ENCODE measurements at regions of chr10 and their contacts with region 1.

Region 1: DNA sequence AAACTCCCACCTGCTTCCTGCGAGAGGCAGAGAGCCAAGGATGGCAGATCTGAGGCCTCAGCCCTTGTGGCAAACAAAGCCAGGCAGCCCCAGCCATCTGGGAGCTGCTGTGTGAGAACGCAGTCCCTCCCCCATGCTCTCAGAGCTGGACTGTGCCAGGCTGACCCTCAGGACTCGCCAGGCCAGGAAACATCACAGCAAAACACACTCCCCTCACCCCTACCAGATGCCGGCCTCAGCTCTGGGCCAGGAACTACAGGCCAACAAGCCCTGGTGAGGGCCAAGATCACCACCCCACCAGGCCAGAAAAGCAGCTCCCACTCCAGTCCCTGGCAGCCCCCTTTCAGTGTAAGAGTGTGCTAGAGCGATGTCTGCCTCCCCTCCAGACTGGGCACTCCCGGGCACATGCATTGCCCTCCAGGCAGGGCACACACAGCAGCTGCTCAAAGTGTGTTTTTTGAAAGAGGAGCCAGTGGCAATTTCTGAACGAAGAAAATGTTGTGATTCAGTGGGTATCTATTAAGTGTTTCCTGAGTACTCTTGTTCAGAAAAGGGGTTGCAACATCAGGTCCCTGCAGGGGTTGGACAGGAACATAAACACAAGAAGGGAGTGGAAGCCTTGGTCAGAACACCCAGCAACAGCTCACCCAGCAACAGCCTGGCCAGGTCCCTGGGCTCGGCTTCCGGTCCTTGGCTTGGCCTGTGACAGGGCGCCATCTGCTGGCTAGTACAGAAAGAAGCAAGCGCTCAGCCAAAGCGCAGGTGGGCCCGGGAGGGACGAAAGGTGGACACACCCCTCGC is 18.3 kb downstream of the LRRC20 start:
- DNase-seq: peak; percentile 89
- H3K4me3 Mint-ChIP-seq: no peak overlapping the region
- H3K27ac Mint-ChIP-seq: peak overlapping the region; percentile 57
- H3K4me1 Mint-ChIP-seq: peaks cover 12% of the 10 kb centered on the region
- H3K27me3 Mint-ChIP-seq: no peaks in the 10 kb centered on the region

Region 2: DNA sequence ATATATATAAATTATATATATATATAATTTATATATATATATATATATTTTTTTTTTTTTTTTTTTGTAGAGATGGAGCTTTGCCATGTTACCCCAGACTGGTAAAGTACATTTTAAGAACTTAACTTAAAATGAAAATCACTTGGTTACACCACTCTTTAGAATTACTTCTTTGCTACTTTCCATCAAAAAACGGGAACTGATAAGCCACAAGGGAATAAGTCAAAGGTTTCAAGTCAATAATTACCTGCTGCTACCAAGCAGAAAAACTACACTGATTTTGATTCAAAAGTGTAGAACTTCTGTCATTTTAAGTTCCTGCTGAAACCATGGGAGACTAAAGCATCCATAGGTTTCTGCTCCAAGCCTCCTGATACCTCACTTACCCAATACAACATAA is 143.1 kb before region 1 on chr10:
- CTCF ChIA-PET with region 1: interaction called, 79 read pairs
- POLR2A ChIA-PET with region 1: interaction called, 13 read pairs
- DNase-seq: no peak
- H3K4me3 Mint-ChIP-seq: peak overlapping the region; percentile 7
- H3K27ac Mint-ChIP-seq: peak overlapping the region; percentile 68
- H3K4me1 Mint-ChIP-seq: peaks cover 23% of the 10 kb centered on the region
- H3K27me3 Mint-ChIP-seq: no peaks in the 10 kb centered on the region

Region 3: DNA sequence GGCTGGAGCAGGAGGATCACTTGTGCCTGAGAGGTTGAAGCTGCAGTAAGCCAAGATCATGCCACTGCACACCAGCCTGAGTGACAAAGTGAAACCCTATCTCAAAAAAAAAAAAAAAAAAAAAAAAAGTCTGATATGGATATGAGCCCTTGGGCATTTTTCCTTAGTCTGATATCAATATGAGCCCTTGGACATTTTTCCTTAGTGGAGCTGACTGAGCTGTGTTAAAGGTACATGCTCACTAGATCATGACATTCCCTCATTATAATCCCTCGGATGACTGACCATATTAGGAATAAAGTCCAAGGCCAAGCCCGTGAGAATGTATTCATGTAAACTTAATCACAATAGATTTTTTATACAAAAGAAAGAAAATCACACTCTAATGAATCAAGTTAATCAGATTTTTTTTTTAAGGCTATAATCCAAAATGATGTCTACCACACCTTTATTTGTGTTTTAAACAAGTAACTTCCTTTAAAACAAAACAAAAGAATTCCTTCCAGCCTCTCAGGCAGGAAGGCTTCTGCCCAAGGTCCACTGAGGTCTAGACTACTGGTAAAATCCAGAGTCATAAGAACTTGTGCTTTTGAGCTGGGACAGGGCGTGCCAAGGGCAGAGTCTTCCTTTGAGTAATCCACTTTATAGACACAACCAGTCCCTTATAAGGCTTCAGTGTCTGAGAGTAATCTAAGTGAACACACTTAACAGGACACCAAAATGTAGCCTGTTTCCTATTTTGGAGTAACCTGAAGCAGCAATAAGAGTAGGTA is 136.4 kb before region 1 on chr10:
- CTCF ChIA-PET with region 1: interaction called, 79 read pairs
- POLR2A ChIA-PET with region 1: no interaction called
- DNase-seq: no peak
- H3K4me3 Mint-ChIP-seq: no peak overlapping the region
- H3K27ac Mint-ChIP-seq: no peak overlapping the region
- H3K4me1 Mint-ChIP-seq: peaks cover 58% of the 10 kb centered on the region
- H3K27me3 Mint-ChIP-seq: no peaks in the 10 kb centered on the region

Region 4: DNA sequence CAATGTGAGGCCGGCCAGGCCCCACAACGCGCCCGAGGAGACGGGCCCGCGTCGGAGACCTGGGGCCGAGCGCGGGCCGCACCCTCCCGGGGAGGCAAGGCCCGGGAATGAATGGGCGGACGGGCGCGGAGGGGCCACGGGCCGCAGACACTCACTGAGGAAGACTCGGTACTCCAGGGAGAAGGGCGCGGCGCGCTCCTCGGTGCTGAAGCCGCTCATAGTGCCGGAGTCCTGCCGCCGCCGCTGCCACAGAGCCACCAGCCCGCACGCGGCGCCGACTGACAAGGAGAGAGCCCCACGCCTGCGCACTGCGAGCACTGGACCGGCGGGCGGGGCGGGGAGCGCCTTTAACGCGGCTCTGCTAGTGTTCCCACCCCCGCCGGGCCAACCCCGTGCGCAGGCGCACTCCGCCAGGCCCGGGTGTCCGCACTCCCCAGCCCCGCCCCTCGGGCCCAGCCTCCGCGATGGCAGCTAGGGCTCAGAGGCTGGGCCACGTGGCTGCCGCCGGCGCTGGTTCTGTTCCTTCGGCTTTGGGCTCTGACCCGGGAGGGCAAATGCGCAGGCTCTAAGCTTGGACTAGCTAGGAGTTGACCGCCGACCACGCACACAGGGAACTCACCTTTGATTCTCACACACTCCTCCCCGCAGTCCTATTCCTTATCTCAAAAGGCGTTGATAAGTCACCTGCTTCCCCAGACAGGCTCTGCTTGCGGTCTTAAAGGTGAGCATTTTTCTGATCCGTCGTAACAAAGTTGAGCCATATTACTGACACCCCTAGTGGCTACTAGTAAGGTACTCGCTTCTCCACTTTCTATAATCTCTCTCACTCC is 130.8 kb before region 1 on chr10 and contains the start of gene PPA1:
- CTCF ChIA-PET with region 1: interaction called, 13 read pairs
- POLR2A ChIA-PET with region 1: interaction called, 3 read pairs
- DNase-seq: peak; percentile 99
- H3K4me3 Mint-ChIP-seq: peak within 1 kb of the TSS; percentile 75
- H3K27ac Mint-ChIP-seq: peak within 1 kb of the TSS; percentile 92
- H3K4me1 Mint-ChIP-seq: peaks cover 46% of the 10 kb centered on the region
- H3K27me3 Mint-ChIP-seq: no peaks in the 10 kb centered on the region
- total RNA-seq, gene PPA1: 124 to 132 TPM

Region 5: DNA sequence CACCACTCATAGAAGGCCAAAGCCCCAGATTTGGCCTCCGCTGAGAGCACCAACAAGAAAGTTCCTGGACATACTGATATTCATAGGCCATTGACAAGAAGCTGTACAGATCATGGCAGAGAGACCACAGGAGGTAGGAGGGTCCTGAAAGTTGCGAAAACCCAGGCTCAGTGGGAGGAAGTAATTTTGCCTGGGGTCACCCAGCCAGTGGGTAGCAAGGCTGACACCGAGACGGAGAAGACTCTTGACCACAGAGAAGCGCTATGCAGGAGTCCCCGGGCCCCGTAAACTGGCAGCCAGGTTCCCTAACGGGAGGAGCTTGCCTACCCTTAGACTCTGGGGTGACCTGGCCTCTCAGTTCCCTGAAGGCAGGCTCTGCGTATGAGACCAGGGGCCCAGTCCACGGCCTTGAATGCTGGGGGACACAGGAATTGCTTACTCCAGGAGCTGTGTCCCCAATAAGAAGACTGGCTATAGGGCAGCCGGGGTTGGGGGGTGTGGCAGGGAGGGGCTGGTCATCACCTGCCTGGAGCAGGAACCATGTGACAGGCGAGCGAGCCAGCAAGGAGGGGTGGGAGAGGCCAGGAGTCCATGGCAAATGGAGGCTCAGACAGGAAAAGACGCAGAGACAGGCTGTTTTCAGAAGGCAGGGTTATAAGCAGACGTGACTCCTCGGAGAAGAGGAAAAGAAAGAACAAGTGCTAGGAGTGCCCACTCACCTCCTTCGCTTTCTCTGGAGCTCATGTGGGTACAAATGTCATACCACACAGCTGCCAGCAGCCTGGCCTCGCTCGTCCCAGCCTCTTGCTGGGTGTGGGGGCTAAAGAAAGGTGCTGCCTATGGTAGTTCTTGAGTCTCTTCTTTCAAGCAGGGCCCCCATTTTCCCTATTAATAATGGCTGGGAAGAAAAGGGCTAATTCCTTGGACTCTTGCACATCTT is 55.8 kb before region 1 on chr10:
- CTCF ChIA-PET with region 1: no interaction called
- POLR2A ChIA-PET with region 1: no interaction called
- DNase-seq: no peak
- H3K4me3 Mint-ChIP-seq: no peak overlapping the region
- H3K27ac Mint-ChIP-seq: no peak overlapping the region
- H3K4me1 Mint-ChIP-seq: peaks cover 2% of the 10 kb centered on the region
- H3K27me3 Mint-ChIP-seq: no peaks in the 10 kb centered on the region

Region 6: GRCh38 chr10:70347321-70347720 is 16.9 kb before region 1 on chr10:
- CTCF ChIA-PET with region 1: interaction called, 24 read pairs
- POLR2A ChIA-PET with region 1: no interaction called
- DNase-seq: no peak
- H3K4me3 Mint-ChIP-seq: no peak overlapping the region
- H3K27ac Mint-ChIP-seq: no peak overlapping the region
- H3K4me1 Mint-ChIP-seq: no peaks in the 10 kb centered on the region
- H3K27me3 Mint-ChIP-seq: no peaks in the 10 kb centered on the region

Region 7: GRCh38 chr10:70374775-70375614 is 10.8 kb after region 1 on chr10:
- CTCF ChIA-PET with region 1: interaction called, 21 read pairs
- POLR2A ChIA-PET with region 1: no interaction called
- DNase-seq: no peak
- H3K4me3 Mint-ChIP-seq: no peak overlapping the region
- H3K27ac Mint-ChIP-seq: no peak overlapping the region
- H3K4me1 Mint-ChIP-seq: no peaks in the 10 kb centered on the region
- H3K27me3 Mint-ChIP-seq: no peaks in the 10 kb centered on the region

Region 8: DNA sequence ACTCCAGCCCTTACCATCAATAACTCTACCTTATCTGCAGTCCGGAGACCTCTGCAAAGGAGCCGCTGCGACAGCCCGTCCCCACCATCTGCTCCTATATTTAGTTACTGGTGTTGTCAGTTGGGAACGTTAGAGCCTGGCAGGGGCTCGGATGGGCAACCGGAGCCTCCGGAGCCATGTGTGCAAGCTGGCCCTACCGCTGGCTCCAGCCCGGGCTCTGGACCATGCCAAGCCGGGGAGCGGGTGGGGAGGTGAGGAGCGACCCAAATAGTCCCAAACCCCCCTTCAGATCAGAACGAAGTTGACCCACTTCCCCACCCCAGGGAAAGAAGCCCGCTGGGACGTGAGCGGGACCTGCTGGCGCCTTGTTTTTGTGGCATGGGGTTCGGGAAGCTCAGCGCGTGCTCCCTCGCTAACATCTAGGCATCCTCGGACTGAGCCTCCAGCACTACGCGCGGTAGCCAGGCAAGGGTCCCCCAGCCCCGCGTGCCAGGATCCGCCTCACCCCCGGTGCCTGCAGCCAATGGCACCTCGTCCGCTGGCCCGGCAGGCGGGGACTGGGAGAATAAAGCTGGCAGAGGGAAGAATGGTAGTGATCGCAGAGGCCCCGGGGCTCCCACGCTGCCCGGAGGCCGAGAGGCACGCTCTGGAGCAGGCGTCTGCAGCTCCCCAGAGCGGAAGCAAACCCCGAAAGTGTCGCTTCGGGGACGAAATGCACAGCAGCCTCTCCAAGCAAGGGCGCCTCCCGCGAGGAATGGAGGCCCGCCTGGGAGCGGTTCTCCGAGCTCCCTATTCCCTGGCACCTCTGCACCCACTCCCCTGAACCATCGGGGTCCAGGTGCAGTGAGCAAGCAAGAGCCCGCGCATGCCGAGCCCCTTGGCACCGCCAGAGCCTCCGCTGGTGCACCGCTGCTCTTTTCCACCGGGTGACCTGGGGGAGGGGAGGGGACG is 17.6 kb after region 1 on chr10:
- CTCF ChIA-PET with region 1: interaction called, 21 read pairs
- POLR2A ChIA-PET with region 1: no interaction called
- DNase-seq: peak; percentile 53
- H3K4me3 Mint-ChIP-seq: peak overlapping the region; percentile 84
- H3K27ac Mint-ChIP-seq: peak overlapping the region; percentile 84
- H3K4me1 Mint-ChIP-seq: peaks cover 21% of the 10 kb centered on the region
- H3K27me3 Mint-ChIP-seq: no peaks in the 10 kb centered on the region

Region 9: DNA sequence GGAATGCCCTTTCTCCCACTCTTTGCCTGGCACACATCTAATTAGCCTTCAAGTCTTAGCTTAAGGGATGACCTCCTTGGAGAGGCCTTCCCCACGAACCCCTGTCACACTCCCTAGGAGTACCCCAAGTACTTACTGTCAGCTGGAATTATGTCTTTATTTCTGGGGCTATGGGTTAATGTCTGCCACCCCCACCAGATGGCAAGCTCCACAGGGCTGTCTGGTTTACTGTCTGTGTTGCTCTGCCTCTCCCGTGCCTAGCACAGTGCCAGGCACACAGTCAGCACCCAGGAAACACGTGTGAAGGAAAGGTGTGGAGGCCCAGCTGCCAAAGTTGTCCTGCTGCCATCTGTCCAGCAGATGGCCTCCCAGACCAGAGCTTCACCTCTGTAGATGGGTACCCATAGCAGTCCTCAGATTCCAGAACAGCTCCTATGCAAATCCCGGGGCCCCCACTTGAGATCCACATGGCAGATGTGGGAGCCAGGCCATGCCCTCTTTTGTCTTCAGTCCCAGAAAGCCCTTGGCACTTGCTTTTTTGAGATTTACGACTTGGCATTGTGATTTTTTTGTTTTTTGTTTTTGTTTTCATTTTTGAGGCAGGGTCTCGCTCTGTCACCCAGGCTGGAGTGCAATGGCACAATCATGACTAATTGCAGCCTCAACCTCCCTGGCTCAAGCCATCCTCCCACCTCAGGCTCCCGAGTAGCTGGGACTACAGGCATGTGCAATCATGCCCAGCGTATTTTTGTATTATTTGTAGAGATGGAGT is 97.2 kb after region 1 on chr10:
- CTCF ChIA-PET with region 1: no interaction called
- POLR2A ChIA-PET with region 1: no interaction called
- DNase-seq: peak; percentile 54
- H3K4me3 Mint-ChIP-seq: no peak overlapping the region
- H3K27ac Mint-ChIP-seq: no peak overlapping the region
- H3K4me1 Mint-ChIP-seq: peaks cover 2% of the 10 kb centered on the region
- H3K27me3 Mint-ChIP-seq: peaks cover 40% of the 10 kb centered on the region